ENCODE measurements at regions of chr12 and their contacts with region 1.

Region 1: GRCh38 chr12:108234158-108234557 is 105.0 kb downstream of the CMKLR1 start:
- DNase-seq: no peak

Region 2: GRCh38 chr12:108457006-108457733 is 223.0 kb after region 1 on chr12:
- intact Hi-C with region 1: loop called (anchors 10 kb)
- DNase-seq: no peak